PC-9 (cell line): ENCODE measurements at regions of chr4 and their contacts with region 1.

Region 1: DNA sequence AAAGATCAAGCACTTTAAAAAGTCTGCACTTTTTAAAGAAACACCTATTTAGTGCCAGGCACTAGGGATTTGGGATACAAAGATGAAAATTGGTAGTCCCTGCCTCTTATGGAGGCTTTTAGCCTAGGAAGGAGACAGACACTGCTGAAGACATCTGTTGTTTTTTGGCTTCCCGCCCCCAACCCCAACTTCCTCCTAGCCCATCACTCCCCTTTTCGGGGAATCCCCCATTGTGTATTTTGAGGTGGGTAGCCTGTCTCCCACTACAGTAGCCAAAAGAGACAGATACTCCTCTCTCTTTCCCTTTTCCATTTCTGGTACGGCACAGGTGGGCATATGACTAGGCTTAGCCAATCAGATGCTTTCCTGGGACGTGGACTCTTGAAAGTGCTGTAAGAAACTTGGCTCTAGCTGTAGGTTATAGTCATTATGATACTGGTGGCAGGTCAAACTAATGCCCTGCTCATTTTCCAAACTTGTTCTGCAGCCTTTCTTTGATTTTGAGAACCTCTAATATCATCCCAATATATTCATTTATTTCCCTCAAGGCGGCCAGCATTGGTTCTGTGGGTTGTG is 194.6 kb upstream of the RBPJ start:
- DNase-seq: no peak
- H3K4me3 ChIP-seq: no peak overlapping the region
- H3K27ac ChIP-seq: no peak overlapping the region
- H3K4me1 ChIP-seq: 0 out of 2 replicates have a peak, but pooled peaks cover 4% of the 10 kb centered on the region
- H3K27me3 ChIP-seq: no peaks in the 10 kb centered on the region
- CTCF ChIP-seq: no peak

Region 2: DNA sequence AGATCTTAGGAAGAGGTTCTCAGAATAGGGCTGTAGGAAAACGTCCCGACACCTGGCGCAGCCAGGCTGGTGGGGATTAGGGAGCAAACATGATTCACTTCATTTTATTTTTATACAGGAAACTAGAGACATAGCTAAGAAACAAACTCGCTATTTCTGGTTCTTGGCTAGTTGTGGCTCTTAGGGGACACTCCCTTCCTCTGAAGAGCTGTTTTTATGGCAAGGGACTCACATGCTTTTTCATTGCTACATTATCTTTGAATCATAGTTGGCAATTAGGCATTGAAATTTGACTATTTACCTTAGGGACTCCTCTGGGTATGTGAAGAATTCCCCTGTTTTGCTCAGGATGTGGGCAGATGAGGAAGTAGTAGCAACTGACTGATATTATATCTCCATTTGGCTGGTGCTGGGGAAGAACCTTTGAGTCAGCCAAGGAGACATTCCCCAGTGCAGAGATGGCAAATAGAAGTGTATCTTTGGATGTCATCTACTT is 37.8 kb before region 1 on chr4:
- CTCF ChIA-PET with region 1: no interaction called
- POLR2A ChIA-PET with region 1: no interaction called
- intact Hi-C with region 1: loop called (anchors 5 kb)
- DNase-seq: peak; percentile 26 to 89
- H3K4me3 ChIP-seq: no peak overlapping the region
- H3K27ac ChIP-seq: peak overlapping the region; percentile 71
- H3K4me1 ChIP-seq: peaks cover 44% of the 10 kb centered on the region
- H3K27me3 ChIP-seq: no peaks in the 10 kb centered on the region
- CTCF ChIP-seq: no peak

Region 3: DNA sequence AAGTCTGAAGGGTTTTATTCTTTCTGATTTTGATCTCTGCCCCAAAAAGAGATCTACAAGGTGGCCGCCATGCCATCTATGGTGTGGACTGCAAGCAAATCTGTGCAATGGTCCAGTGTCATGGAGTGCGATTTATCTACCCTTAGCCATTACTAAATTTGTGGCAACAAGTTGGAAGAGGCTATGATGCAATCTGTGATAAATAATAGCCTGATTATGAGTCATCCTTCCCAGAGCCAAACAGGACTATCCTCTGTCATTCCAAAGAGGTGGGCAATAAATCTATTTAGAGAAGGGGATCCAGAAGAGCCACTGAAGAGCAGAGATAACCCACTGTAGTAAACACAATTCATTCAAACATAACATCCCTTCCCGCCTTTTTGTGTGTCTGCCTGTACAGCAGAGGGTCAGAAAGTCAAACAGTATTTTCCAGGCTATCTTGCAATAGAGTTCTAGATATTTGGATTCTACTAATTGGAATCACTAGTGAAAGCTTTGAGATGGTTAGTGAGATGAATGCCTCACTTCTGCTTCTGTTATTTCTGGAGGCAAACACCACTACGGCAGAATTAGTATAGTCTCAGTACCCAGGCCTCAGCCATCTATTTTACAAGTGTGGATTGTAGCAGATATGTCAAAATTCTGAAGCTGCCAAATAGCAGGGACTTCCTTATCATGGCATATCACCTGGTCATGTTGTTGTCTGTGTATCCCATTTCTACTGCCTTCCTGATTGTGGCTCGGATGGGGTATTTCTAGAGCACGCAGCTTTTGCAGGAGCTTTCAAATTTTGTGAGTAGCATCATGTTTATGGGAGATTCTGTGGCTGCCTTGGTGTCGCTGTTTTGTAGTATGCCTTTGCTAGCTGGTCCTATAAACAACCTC is 20.2 kb before region 1 on chr4:
- CTCF ChIA-PET with region 1: interaction called, 19 read pairs
- POLR2A ChIA-PET with region 1: no interaction called
- intact Hi-C with region 1: no loop called
- DNase-seq: no peak
- H3K4me3 ChIP-seq: no peak overlapping the region
- H3K27ac ChIP-seq: no peak overlapping the region
- H3K4me1 ChIP-seq: peaks cover 11% of the 10 kb centered on the region
- H3K27me3 ChIP-seq: no peaks in the 10 kb centered on the region
- CTCF ChIP-seq: no peak

Region 4: DNA sequence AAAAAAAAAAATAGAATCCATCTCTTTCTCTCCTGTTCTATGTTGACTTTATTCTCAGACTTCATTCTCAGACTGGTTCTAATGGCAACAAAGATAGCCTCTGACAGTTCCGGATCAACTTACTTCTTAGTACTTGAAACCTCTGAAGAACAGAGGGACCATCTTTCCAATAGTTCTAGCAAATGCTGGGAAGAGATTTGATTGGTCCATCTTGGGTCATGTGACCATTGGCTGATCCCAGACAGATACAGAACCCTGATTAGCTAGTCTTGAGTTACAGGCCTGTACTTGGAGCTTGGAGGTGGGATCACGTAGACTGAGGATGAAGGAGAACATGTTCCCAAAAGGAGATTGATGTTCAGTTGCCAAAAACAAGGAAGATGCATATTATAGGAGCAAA is 667.5 kb after region 1 on chr4:
- CTCF ChIA-PET with region 1: no interaction called
- POLR2A ChIA-PET with region 1: no interaction called
- intact Hi-C with region 1: no loop called
- DNase-seq: no peak
- H3K4me3 ChIP-seq: no peak overlapping the region
- H3K27ac ChIP-seq: no peak overlapping the region
- H3K4me1 ChIP-seq: 0 out of 2 replicates have a peak, but pooled peaks cover 2% of the 10 kb centered on the region
- H3K27me3 ChIP-seq: no peaks in the 10 kb centered on the region
- CTCF ChIP-seq: no peak